Activated B cell treated with CpG ODN at 0.5 μM for 24 hours (primary cell): ENCODE measurements at regions of chr6 and their contacts with region 1.

Region 1: GRCh38 chr6:33534702-33535101 is 45.4 kb downstream of the BAK1 start:
- DNase-seq: no peak
- ATAC-seq: no peak
- H3K4me3 Mint-ChIP-seq: no peak overlapping the region
- H3K27ac Mint-ChIP-seq: no peak overlapping the region
- H3K4me1 Mint-ChIP-seq: no peaks in the 10 kb centered on the region
- H3K27me3 Mint-ChIP-seq: no peaks in the 10 kb centered on the region
- CTCF ChIP-seq: no peak

Region 2: GRCh38 chr6:33549196-33549595 is 14.5 kb after region 1 on chr6:
- CTCF ChIA-PET with region 1: no interaction called
- POLR2A ChIA-PET with region 1: interaction called, 4 read pairs
- intact Hi-C with region 1: loop called (anchors 2 kb)
- DNase-seq: no peak
- ATAC-seq: no peak
- H3K4me3 Mint-ChIP-seq: no peak overlapping the region
- H3K27ac Mint-ChIP-seq: no peak overlapping the region
- H3K4me1 Mint-ChIP-seq: peaks cover 8% of the 10 kb centered on the region
- H3K27me3 Mint-ChIP-seq: peaks cover 6% of the 10 kb centered on the region
- CTCF ChIP-seq: no peak